ENCODE measurements at regions of chr4 and their contacts with region 1.

Region 1: GRCh38 chr4:2817701-2818350 is 24.9 kb downstream of the SH3BP2 start:
- DNase-seq: no peak
- ATAC-seq: peak; percentile 52
- H3K4me3 ChIP-seq: peak overlapping the region; percentile 35
- H3K4me3 Mint-ChIP-seq: peak overlapping the region; percentile 77 to 93 (median 82)
- H3K27ac ChIP-seq: peak overlapping the region; percentile 54
- H3K27ac Mint-ChIP-seq: peak overlapping the region in 6 of 9 donors; percentile 9 to 94 (median 82)
- H3K4me1 ChIP-seq: peaks cover 36 to 54% of the 10 kb centered on the region in 2 donors
- H3K4me1 Mint-ChIP-seq: peaks cover 45 to 67% (median 56%) of the 10 kb centered on the region in 7 donors
- H3K27me3 ChIP-seq: no peaks in the 10 kb centered on the region
- H3K27me3 Mint-ChIP-seq: no peaks in the 10 kb centered on the region

Region 2: GRCh38 chr4:2689825-2690700 is 127.8 kb before region 1 on chr4:
- CTCF ChIA-PET with region 1: no interaction called
- POLR2A ChIA-PET with region 1: no interaction called
- intact Hi-C with region 1: no loop called
- DNase-seq: no peak
- ATAC-seq: peak; percentile 85
- H3K4me3 ChIP-seq: no peak overlapping the region
- H3K4me3 Mint-ChIP-seq: no peak overlapping the region
- H3K27ac ChIP-seq: no peak overlapping the region
- H3K27ac Mint-ChIP-seq: peak overlapping the region in 6 of 9 donors; percentile 39 to 85 (median 60)
- H3K4me1 ChIP-seq: no peaks in the 10 kb centered on the region
- H3K4me1 Mint-ChIP-seq: peaks cover 0 to 11% (median 6%) of the 10 kb centered on the region in 7 donors
- H3K27me3 ChIP-seq: no peaks in the 10 kb centered on the region
- H3K27me3 Mint-ChIP-seq: no peaks in the 10 kb centered on the region

Region 3: GRCh38 chr4:2837904-2838496 is 20.2 kb after region 1 on chr4:
- CTCF ChIA-PET with region 1: interaction called, 5 read pairs
- POLR2A ChIA-PET with region 1: interaction called, 100 read pairs
- intact Hi-C with region 1: loop called (anchors 1 to 2 kb)
- DNase-seq: peak in 7 of 9 donors; percentile 74 to 86 (median 83)
- ATAC-seq: peak; percentile 94
- H3K4me3 ChIP-seq: peak overlapping the region; percentile 66
- H3K4me3 Mint-ChIP-seq: peak overlapping the region; percentile 82 to 96 (median 88)
- H3K27ac ChIP-seq: peak overlapping the region; percentile 82
- H3K27ac Mint-ChIP-seq: peak overlapping the region; percentile 91 to 98 (median 94)
- H3K4me1 ChIP-seq: peaks cover 54 to 60% of the 10 kb centered on the region in 2 donors
- H3K4me1 Mint-ChIP-seq: peaks cover 48 to 83% (median 54%) of the 10 kb centered on the region in 7 donors
- H3K27me3 ChIP-seq: no peaks in the 10 kb centered on the region
- H3K27me3 Mint-ChIP-seq: no peaks in the 10 kb centered on the region

Measured in naive thymus-derived CD4-positive, alpha-beta T cell (primary cell).